ENCODE measurements at regions of chr10 and their contacts with region 1.

Region 1: DNA sequence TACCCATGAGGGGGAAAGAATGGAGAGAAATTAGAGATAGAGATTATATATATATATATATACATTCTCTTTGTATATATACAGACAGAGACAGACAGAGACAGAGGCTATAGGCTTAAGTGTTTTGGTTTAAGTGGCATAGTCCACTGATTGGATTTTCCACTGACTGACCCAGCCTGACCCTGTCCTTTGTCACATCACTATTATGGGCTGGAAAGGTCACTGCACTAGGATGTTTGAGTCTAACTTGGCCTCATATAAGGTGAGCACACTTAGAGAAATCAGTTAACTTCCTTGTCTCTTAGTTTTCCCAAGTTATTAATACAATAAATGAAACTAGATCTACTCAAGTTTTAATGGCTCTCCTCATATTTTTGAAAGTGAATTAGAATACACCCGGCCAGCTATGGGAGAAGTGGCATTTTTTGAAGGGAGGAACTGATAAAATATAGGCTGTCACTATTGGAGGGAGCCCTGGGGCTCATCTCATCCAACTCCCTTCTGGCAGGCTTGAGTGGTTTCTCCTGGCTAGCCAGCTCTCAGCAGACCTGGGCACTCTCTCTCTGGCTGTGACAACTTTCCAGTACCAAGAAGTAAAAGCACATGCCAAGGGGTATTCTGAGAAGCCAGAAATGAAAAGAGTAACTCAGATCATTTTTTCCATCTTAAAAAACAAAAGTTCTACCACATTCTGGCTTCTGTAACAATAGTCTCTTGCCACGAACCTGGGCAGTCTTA is 455.6 kb upstream of the ANKRD30A start:
- DNase-seq: no peak

Region 2: GRCh38 chr10:35813219-35813618 is 856.6 kb before region 1 on chr10:
- intact Hi-C with region 1: no loop called
- DNase-seq: no peak

Region 3: DNA sequence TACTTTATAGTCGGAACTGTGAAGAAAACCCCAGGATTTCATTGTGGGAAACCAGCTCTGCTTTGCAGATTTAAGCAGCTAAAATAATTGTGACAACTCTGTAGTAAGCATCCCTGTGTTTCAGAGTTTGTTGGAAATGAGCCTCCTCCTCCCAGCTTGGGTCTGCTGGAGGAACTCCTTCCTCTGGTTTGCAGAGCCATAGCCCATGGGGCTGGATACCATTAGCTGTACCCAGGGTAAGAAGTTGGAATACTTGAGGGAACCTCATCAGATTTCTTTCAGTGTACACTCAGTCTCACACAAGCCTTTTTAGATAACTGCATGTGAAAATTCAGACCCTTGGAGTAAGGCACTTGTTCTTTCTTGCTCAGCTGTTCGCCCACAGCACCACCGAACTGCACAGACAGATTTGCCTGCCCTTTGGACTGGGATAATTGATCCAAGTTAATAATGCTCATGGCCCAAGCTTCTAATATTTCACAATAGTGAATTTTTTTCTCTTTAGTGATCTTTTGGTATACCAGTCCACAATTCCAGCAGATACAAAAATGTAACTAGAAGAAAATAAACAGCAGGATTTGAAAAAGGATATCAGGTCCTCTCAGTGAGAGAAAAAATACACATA is 560.3 kb before region 1 on chr10:
- intact Hi-C with region 1: no loop called
- DNase-seq: no peak

Region 4: GRCh38 chr10:36592961-36593360 is 76.8 kb before region 1 on chr10:
- intact Hi-C with region 1: loop called in 1 of 2 experiments (anchors 2 kb)
- DNase-seq: no peak

Region 5: GRCh38 chr10:37680716-37681616 is 1011.2 kb after region 1 on chr10:
- intact Hi-C with region 1: no loop called
- DNase-seq: peak; percentile 68